Breast epithelium (tissue), 4 donors: ENCODE measurements at regions of chr3 and their contacts with region 1.

Region 1: DNA sequence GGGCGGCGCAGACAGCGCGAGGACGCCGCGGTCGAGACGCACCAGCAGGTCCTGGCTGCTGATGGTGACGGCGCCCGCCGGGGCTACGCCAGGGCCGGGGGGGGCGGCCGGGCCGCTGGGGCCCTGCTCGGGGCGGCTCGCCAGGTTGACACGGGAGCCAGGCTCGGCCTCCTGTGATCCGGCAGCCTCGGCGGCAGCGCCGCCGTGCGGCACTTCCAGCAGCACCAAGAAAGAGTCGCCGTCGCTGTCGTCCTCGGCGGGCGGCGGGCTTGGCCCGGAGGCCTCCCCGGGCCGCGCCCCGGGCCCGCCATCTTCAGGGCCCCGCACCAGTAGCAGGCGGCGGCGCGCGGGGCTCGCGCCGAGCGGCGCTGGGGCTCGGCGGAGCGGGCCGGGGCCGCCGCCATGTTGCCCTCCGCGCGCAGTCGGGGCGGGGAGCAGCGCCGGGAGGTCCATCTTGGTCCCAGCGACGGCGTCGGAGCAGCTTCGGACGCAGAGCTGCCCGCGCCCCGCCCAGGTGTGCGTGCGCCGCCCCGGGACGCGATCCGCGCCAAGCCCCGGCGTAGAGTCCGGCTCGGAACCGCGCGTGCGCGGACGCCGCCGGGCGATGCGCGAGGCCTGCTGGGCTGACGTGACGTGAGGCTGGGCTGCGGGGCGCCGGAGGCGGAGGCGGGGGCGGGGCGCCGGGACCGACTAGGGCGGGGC is at the start of gene ZXDC:
- DNase-seq: peak; percentile 93 to 94
- H3K4me3 ChIP-seq: peak within 1 kb of the TSS; percentile 58 to 76 (median 74)
- H3K27ac ChIP-seq: peak within 1 kb of the TSS; percentile 94 to 98
- H3K4me1 ChIP-seq: peaks cover 4 to 20% of the 10 kb centered on the region in 2 donors
- H3K27me3 ChIP-seq: no peaks in the 10 kb centered on the region
- CTCF ChIP-seq: peak in 1 of 3 donors; percentile 40
- POLR2A ChIP-seq: no peak
- total RNA-seq, gene ZXDC: 37.6 to 42.4 (median 39.0) TPM

Region 2: DNA sequence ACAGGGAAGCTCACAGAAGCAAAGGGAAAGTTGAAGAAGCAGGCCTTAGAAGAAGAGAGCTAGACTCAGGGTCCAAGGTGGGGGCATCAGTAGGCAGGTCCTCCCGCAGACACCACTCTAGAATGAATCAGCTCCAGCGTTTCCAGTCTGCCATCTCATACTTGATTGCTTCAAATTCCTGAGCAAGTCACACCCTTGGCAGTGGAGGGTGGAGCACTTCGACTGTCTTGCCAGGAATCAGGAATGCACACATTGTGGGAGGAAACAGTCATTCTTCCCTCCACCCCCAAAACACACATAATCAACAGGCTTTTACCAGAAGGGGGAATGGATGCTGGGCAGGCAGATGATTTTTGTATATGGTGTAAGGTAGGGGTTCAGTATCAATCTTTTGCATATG is 307.0 kb after region 1 on chr3:
- intact Hi-C with region 1: loop called (anchors 10 kb)
- DNase-seq: no peak
- H3K4me3 ChIP-seq: no peak overlapping the region
- H3K27ac ChIP-seq: peak overlapping the region in 1 of 2 donors; percentile 62
- H3K4me1 ChIP-seq: no peaks in the 10 kb centered on the region
- H3K27me3 ChIP-seq: no peaks in the 10 kb centered on the region
- CTCF ChIP-seq: no peak
- POLR2A ChIP-seq: no peak